GM18951 (cell line): ENCODE measurements at regions of chrX and their contacts with region 1.

Region 1: DNA sequence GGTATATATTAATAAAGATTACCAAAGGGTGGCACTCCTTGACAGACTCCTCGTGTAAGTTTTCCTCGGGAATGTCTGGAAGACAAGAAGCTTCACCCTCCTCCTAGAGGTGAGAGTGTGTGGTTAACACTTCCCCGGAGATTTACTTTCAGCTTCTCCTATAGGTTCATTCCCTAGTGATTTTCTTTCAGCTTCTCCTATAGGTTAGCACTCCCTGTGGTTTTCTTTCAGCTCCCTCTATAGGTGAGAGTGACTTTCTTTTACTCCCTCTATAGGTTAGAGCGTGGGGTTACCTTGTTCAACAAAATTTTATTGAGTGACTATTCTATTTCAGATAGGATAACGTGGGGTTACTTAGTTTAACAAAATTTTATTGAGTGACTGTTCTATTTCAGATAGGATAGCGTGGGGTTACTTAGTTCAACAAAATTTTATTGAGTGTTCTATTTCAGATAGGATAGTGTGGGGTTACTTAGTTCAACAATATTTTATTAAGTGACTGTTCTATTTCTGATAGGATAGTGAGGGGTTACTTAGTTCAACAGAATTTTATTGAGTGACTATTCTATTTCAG is 106.0 kb upstream of the PLAC1 start:
- POLR2A ChIP-seq: no peak

Region 2: GRCh38 chrX:134520860-134521390 is 243.4 kb before region 1 on chrX:
- in situ Hi-C with region 1: loop called (anchors 25 kb)
- POLR2A ChIP-seq: no peak

Region 3: GRCh38 chrX:134631426-134632346 is 132.6 kb before region 1 on chrX:
- in situ Hi-C with region 1: no loop called
- POLR2A ChIP-seq: no peak

Region 4: GRCh38 chrX:135086197-135086854 is 322.0 kb after region 1 on chrX:
- in situ Hi-C with region 1: no loop called
- POLR2A ChIP-seq: no peak